Heart left ventricle (tissue), 16 donors: ENCODE measurements at regions of chr17 and their contacts with region 1.

Region 1: GRCh38 chr17:7014261-7014994 is 2.0 kb downstream of the RNASEK start:
- DNase-seq: peak; percentile 97 to 99 (median 99)
- ATAC-seq: peak; percentile 85 to 92 (median 89)
- H3K4me3 ChIP-seq: peak overlapping the region; percentile 75 to 99 (median 91)
- H3K27ac ChIP-seq: peak overlapping the region; percentile 89 to 99 (median 97)
- H3K4me1 ChIP-seq: peaks cover 16 to 82% (median 58%) of the 10 kb centered on the region in 12 donors
- H3K27me3 ChIP-seq: no peaks in the 10 kb centered on the region
- CTCF ChIP-seq: peak; percentile 62 to 93 (median 84)
- POLR2A ChIP-seq: peak in 1 of 2 donors; percentile 68

Region 2: GRCh38 chr17:6651357-6651918 is 363.0 kb before region 1 on chr17 and contains the starts of genes C17orf100 and MED31:
- intact Hi-C with region 1: loop called in 1 of 10 experiments (anchors 5 kb)
- DNase-seq: peak; percentile 94 to 98 (median 96)
- ATAC-seq: peak; percentile 99 to 100 (median 100)
- H3K4me3 ChIP-seq: peak within 1 kb of the TSS; percentile 59 to 93 (median 81)
- H3K27ac ChIP-seq: peak within 1 kb of the TSS in 11 of 12 donors; percentile 67 to 91 (median 78)
- H3K4me1 ChIP-seq: peaks cover 4 to 50% (median 27%) of the 10 kb centered on the region in 12 donors
- H3K27me3 ChIP-seq: peaks cover 3 to 32% (median 17%) of the 10 kb centered on the region in 9 donors
- CTCF ChIP-seq: peak in 1 of 12 donors; percentile 6
- POLR2A ChIP-seq: peak in 1 of 2 donors; percentile 69
- total RNA-seq, gene C17orf100: 0.30 to 0.75 (median 0.56) TPM
- total RNA-seq, gene MED31: 5.4 to 17.5 (median 13.7) TPM

Region 3: DNA sequence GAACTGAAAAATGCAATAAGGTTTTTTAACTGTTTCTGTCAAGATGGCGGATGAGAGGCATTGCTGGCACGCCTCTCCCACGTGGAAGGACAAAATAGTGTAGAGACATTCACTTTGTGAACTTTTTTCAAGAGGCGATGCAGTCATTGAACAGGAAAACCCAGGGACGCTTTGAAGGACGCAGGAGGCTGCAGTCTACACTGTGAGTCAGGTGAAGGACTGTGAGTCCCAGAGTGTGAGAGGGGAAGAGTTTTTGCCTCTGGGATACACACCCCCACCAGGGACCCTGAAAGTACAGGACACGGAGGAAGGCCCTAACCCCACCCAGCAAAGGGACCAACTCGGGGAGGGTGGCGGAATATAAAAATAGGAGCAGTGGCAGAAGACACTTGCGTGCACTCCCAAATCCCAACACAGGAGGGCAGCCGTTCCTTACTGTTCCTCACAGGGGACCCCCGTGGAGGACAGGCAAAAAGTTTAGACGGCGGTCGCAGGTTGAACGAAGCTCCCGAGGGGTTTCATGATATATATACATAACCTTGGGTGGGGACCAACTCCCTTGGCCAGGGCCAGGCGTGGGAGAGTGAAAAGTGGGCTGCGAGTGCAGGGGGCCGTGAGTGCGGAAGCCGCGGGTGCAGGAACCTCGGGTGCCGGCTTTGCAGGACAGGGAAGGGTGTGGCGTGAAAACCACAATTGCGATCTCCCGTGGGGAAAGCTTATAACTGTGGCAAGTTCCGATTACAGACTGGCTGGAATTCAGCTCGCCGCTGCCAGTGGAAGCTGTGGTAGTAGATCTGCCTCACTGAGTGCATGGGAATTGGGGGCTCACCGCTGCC is 100.6 kb before region 1 on chr17:
- intact Hi-C with region 1: loop called in 1 of 10 experiments (anchors 2 kb)
- DNase-seq: peak; percentile 72 to 81 (median 76)
- ATAC-seq: peak; percentile 77 to 90 (median 82)
- H3K4me3 ChIP-seq: peak overlapping the region in 9 of 12 donors; percentile 16 to 50 (median 37)
- H3K27ac ChIP-seq: no peak overlapping the region
- H3K4me1 ChIP-seq: peaks cover 0 to 11% (median 6%) of the 10 kb centered on the region in 12 donors
- H3K27me3 ChIP-seq: peaks cover 0 to 12% (median 0%) of the 10 kb centered on the region in 9 donors
- CTCF ChIP-seq: peak; percentile 77 to 88 (median 84)
- POLR2A ChIP-seq: no peak